GM18951 (cell line): ENCODE measurements at regions of chr3 and their contacts with region 1.

Region 1: DNA sequence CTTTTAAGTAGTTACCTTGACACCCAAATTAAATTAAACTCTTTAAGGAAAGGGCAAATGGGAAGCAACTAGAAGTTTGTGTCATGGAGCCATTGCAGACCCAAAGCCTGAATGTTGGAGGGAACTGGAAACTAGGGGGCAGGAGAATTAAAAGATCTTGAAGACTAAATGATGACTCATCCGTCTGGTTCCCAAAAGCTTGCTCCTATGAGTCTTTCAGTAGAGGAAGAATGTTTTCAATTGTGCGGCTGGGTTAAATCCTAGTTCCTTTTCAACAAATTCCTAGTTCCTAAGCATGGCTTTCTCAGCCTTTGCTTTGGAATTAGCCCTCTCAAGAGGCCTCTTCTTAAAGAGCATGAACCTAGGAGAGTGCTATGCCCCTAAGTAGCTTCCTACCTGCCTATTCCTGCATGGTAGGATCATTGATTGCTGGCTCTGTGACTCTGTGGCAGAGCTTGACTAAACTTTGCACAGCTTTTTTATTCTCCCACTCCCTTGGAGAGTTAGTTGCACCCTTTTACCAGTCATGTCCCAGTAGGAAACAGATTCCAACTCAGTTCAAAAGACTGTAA is 17.7 kb downstream of the CLEC3B start:
- POLR2A ChIP-seq: no peak

Region 2: DNA sequence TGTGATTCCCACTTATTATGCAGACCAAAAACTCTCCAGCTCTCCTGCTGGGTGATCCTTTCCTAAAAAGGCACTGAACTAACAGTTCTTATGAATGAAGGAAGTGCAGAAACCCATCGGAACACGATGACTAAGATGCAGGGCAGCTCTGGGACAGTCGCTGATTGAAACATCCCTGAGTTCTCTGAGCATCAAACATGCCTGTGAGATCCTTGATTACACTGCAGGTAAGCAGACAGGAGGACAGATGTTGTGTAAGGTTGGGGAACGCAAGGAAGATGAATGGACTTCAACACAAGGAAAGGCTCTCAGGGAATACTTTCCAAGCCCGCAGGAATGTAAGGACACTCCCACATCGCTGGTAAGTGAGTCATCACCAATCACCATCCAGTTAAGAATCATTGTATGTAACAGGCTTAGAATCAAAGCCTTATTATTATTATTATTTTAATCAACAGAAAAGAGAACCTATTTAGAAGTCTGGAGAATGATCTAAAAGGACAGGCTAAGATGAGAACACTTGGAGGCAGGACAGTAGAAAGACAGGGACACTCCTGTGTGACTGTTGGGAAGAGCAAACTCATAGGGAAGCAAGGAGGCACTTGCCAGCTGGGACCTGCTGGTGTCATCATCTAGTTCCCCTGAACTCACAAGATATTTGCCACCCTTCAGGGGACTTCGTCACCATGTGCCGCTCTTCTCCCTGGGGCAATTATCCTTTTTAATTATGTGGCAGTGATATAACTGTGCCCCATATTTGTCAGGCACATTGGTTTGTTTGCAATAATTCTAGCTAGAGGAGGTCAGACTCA is 156.2 kb after region 1 on chr3:
- in situ Hi-C with region 1: loop called (anchors 5 kb)
- POLR2A ChIP-seq: no peak

Region 3: DNA sequence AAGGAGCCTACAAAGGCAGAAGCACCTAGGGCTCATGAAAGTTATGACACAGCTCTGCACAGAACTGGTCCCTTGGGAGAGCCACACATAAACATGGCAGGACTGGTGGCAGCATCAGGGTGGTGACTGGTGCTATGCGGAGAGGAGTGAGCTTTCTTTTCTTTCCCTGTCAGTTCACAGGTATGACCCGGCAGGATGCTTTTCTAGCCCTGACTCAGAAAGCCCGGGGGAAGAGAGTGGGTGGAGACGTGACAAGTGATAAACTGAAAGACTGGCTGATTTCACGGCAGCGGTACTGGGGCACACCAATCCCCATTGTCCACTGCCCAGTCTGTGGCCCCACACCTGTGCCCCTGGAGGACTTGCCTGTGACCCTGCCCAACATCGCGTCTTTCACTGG is 447.5 kb after region 1 on chr3:
- in situ Hi-C with region 1: loop called (anchors 5 kb)
- POLR2A ChIP-seq: no peak